ENCODE measurements at regions of chr17 and their contacts with region 1.

Region 1: GRCh38 chr17:7769854-7770253 is 52.3 kb downstream of the DNAH2 start:
- DNase-seq: no peak
- H3K4me3 ChIP-seq: no peak overlapping the region
- H3K27ac ChIP-seq: no peak overlapping the region
- H3K4me1 ChIP-seq: no peaks in the 10 kb centered on the region; a peak in 1 of 4 replicates
- H3K27me3 ChIP-seq: no peaks in the 10 kb centered on the region; the same call in 1 of the 2 replicates
- CTCF ChIP-seq: no peak
- EP300 ChIP-seq: no peak
- RAD21 ChIP-seq: no peak

Region 2: GRCh38 chr17:7695586-7695985 is 74.3 kb before region 1 on chr17:
- CTCF ChIA-PET with region 1: no interaction called
- POLR2A ChIA-PET with region 1: no interaction called
- DNase-seq: no peak
- H3K4me3 ChIP-seq: no peak overlapping the region
- H3K27ac ChIP-seq: no peak overlapping the region
- H3K4me1 ChIP-seq: no peaks in the 10 kb centered on the region
- H3K27me3 ChIP-seq: no peaks in the 10 kb centered on the region
- CTCF ChIP-seq: no peak
- EP300 ChIP-seq: no peak
- RAD21 ChIP-seq: no peak

Region 3: GRCh38 chr17:7740481-7741001 is 29.3 kb before region 1 on chr17:
- CTCF ChIA-PET with region 1: interaction called, 11 read pairs
- POLR2A ChIA-PET with region 1: no interaction called
- DNase-seq: no peak
- H3K4me3 ChIP-seq: no peak overlapping the region
- H3K27ac ChIP-seq: no peak overlapping the region
- H3K4me1 ChIP-seq: peaks cover 0 to 2% of the 10 kb centered on the region in 2 experiments; a peak in 2 of 4 replicates
- H3K27me3 ChIP-seq: peaks cover 19% of the 10 kb centered on the region
- CTCF ChIP-seq: no peak
- EP300 ChIP-seq: no peak
- RAD21 ChIP-seq: no peak